ENCODE measurements at regions of chr12 and their contacts with region 1.

Region 1: GRCh38 chr12:91382081-91382543 is 199.5 kb upstream of the DCN start:
- DNase-seq: peak; percentile 86
- H3K4me3 Mint-ChIP-seq: peak overlapping the region; percentile 60
- H3K27ac Mint-ChIP-seq: no peak overlapping the region
- H3K4me1 Mint-ChIP-seq: peaks cover 5% of the 10 kb centered on the region
- H3K27me3 Mint-ChIP-seq: peaks cover 4% of the 10 kb centered on the region

Region 2: GRCh38 chr12:91400271-91400670 is 18.2 kb after region 1 on chr12:
- CTCF ChIA-PET with region 1: interaction called, 11 read pairs
- POLR2A ChIA-PET with region 1: no interaction called
- intact Hi-C with region 1: no loop called
- DNase-seq: no peak
- H3K4me3 Mint-ChIP-seq: no peak overlapping the region
- H3K27ac Mint-ChIP-seq: no peak overlapping the region
- H3K4me1 Mint-ChIP-seq: no peaks in the 10 kb centered on the region
- H3K27me3 Mint-ChIP-seq: no peaks in the 10 kb centered on the region

Region 3: DNA sequence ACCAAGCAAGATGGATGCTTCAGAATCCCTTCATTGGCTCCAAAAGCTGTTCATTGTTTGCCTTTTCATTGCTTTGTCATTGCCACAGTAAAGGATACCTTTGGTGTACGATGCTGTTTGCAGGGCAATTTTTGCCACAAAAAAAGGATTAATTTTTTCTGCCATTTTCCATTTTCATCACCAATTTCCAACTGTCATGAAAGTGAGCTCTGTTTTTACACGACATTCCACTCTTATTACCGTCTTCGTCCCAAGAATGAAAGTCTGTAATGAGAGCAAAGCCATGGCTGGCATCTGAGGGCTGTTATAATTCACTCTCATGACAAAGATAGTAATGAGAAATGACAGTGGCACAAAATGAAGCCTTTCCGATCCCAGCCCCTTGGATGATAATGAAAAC is 73.2 kb after region 1 on chr12:
- CTCF ChIA-PET with region 1: no interaction called
- POLR2A ChIA-PET with region 1: no interaction called
- intact Hi-C with region 1: no loop called
- DNase-seq: no peak
- H3K4me3 Mint-ChIP-seq: no peak overlapping the region
- H3K27ac Mint-ChIP-seq: no peak overlapping the region
- H3K4me1 Mint-ChIP-seq: no peaks in the 10 kb centered on the region
- H3K27me3 Mint-ChIP-seq: peaks cover 4% of the 10 kb centered on the region

Region 4: DNA sequence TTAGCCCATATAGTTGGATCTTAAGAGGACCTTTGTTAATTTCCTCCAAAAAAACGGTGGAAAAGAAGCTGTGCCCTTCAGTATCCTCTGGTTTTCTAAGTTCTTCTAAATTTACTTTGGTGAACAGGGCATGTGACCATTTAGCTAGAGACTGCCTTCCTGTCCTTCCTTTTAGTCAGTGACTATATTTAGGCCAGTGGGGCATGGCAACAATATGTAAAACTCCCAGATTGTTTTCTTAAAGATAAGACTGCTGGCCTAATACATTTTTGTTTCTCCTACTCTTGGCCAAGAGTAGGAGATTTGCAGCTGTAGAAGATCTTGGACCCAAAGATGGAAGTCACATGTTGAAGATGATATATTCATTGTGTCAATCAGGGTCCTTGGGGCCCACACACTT is 125.6 kb after region 1 on chr12:
- CTCF ChIA-PET with region 1: no interaction called
- POLR2A ChIA-PET with region 1: no interaction called
- intact Hi-C with region 1: no loop called
- DNase-seq: no peak
- H3K4me3 Mint-ChIP-seq: no peak overlapping the region
- H3K27ac Mint-ChIP-seq: no peak overlapping the region
- H3K4me1 Mint-ChIP-seq: no peaks in the 10 kb centered on the region
- H3K27me3 Mint-ChIP-seq: no peaks in the 10 kb centered on the region

Region 5: DNA sequence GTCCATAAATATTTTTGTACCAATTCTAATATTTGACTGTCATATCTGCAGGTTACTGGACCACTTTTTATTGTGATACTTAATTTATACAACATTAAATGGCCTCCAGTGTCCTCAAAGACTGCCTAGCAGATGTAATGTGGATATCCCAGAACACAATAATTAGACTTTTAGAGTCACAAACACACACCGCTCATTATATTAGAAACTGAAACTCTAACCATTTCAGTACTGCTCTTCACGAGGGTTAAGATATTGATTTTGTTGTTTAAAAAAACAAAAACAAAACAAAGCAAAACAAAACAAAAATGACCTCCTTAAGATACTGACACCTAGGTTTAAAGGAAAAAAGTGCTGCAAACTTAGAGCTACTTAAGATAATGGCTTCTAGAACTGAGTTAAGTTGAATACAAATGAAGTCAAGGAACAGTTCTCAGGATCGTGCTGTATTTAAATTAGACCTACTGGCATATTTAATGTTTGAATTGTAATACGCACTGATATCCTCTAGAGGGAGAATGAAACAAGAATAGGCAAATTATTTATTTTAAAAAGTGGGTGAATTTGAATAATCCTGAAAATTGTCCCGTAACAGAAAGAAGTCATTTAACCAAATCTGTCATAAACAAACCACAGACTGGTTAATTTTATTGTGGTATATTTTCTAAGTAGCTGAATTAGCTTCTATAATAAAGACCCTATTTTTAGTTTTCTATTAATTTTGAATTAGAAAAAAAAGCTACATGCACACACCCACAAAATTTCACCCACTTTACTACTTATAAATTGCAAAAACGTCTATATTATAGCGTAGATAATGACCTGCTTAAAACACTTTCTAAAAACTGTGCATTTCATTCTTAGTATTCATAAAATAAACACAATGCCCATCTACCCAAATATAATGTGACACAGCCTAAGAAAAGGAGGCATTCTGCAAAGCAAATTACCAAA is 195.8 kb after region 1 on chr12:
- CTCF ChIA-PET with region 1: interaction called, 14 read pairs
- POLR2A ChIA-PET with region 1: no interaction called
- intact Hi-C with region 1: loop called (anchors 5 kb)
- DNase-seq: no peak
- H3K4me3 Mint-ChIP-seq: peak overlapping the region; percentile 63
- H3K27ac Mint-ChIP-seq: no peak overlapping the region
- H3K4me1 Mint-ChIP-seq: peaks cover 4% of the 10 kb centered on the region
- H3K27me3 Mint-ChIP-seq: peaks cover 2% of the 10 kb centered on the region

Region 6: GRCh38 chr12:92649511-92650227 is 1267.6 kb after region 1 on chr12:
- CTCF ChIA-PET with region 1: interaction called, 12 read pairs
- POLR2A ChIA-PET with region 1: no interaction called
- intact Hi-C with region 1: loop called (anchors 1 kb)
- DNase-seq: peak; percentile 65
- H3K4me3 Mint-ChIP-seq: no peak overlapping the region
- H3K27ac Mint-ChIP-seq: no peak overlapping the region
- H3K4me1 Mint-ChIP-seq: peaks cover 12% of the 10 kb centered on the region
- H3K27me3 Mint-ChIP-seq: no peaks in the 10 kb centered on the region

Region 7: GRCh38 chr12:92654929-92655328 is 1272.8 kb after region 1 on chr12:
- CTCF ChIA-PET with region 1: interaction called, 12 read pairs
- POLR2A ChIA-PET with region 1: no interaction called
- intact Hi-C with region 1: loop called (anchors 1 kb)
- DNase-seq: no peak
- H3K4me3 Mint-ChIP-seq: no peak overlapping the region
- H3K27ac Mint-ChIP-seq: no peak overlapping the region
- H3K4me1 Mint-ChIP-seq: peaks cover 3% of the 10 kb centered on the region
- H3K27me3 Mint-ChIP-seq: no peaks in the 10 kb centered on the region

Measured in activated CD4-positive, alpha-beta memory T cell treated with anti-CD3 and anti-CD28 coated beads for 36 hours (primary cell).